Thyroid gland (tissue), 4 donors: ENCODE measurements at regions of chr9 and their contacts with region 1.

Region 1: DNA sequence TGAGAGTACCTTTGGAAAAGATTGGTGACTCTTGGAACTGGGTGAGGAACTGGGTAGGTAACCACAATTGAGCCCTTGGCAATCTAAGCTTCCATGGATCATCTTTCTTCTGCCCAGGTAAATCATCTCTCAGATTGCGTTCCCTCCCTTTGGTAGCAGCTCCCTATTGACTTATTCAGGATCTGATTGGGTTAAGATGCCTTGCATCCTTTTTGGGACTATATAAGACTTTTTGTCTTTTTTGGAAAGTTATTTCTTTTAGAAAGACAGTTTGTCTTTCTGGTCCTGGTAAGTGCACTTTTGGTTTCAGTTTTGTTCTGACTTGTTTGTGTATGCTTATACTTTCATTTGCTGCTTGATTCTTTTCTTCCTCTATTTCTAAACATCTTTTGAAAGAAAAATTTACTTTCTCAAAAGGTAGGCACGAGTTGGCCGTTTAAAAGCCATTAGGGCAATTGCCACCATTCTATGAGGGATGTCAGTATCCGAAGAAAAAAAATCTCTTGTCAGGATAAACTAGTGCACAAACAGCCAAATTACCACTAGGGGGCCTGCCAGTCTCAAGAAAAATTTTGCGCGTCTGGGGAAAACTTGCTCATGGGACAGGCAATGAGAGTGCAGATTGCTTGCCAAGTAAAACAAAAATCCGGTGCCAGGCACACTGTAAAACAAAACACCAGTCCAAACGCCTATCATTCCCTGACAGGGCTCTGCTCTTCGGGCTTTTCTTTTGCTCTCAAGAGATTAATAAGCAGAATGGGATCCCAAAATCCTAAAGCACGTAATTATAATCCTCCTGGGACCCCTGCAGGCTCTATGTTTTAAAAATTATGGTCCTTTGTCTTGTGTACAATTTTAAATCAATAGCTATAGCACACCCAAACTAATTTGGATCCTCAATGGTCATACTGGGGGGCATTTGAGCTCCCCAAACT is 12.8 kb downstream of the OR1J1 start:
- DNase-seq: peak; percentile 82 to 87
- H3K4me3 ChIP-seq: peak overlapping the region in 1 of 3 donors; percentile 8
- H3K27ac ChIP-seq: peak overlapping the region in 2 of 3 donors; percentile 28 to 33
- H3K4me1 ChIP-seq: peaks cover 11 to 13% of the 10 kb centered on the region in 2 donors
- H3K27me3 ChIP-seq: no peaks in the 10 kb centered on the region
- CTCF ChIP-seq: peak; percentile 68 to 94 (median 82)
- POLR2A ChIP-seq: no peak

Region 2: GRCh38 chr9:122810306-122810946 is 345.5 kb after region 1 on chr9:
- intact Hi-C with region 1: loop called (anchors 2 kb)
- DNase-seq: peak; percentile 65 to 79
- H3K4me3 ChIP-seq: no peak overlapping the region
- H3K27ac ChIP-seq: no peak overlapping the region
- H3K4me1 ChIP-seq: peaks cover 4 to 6% of the 10 kb centered on the region in 2 donors
- H3K27me3 ChIP-seq: no peaks in the 10 kb centered on the region
- CTCF ChIP-seq: peak; percentile 58 to 96 (median 76)
- POLR2A ChIP-seq: no peak